CD8-positive, alpha-beta T cell (primary cell): ENCODE measurements at regions of chr12 and their contacts with region 1.

Region 1: GRCh38 chr12:103140286-103140685 is 182.8 kb downstream of the ASCL1 start:
- DNase-seq: no peak
- ATAC-seq: no peak
- H3K4me3 ChIP-seq: no peak overlapping the region
- H3K4me3 Mint-ChIP-seq: no peak overlapping the region
- H3K27ac ChIP-seq: no peak overlapping the region
- H3K27ac Mint-ChIP-seq: no peak overlapping the region
- H3K4me1 ChIP-seq: no peaks in the 10 kb centered on the region
- H3K4me1 Mint-ChIP-seq: no peaks in the 10 kb centered on the region
- H3K27me3 ChIP-seq: no peaks in the 10 kb centered on the region
- H3K27me3 Mint-ChIP-seq: no peaks in the 10 kb centered on the region
- CTCF ChIP-seq: no peak

Region 2: GRCh38 chr12:103197725-103198388 is 57.6 kb after region 1 on chr12:
- CTCF ChIA-PET with region 1: no interaction called
- POLR2A ChIA-PET with region 1: no interaction called
- intact Hi-C with region 1: loop called in 1 of 2 experiments (anchors 5 kb)
- DNase-seq: no peak
- ATAC-seq: no peak
- H3K4me3 ChIP-seq: no peak overlapping the region
- H3K4me3 Mint-ChIP-seq: no peak overlapping the region
- H3K27ac ChIP-seq: no peak overlapping the region
- H3K27ac Mint-ChIP-seq: no peak overlapping the region
- H3K4me1 ChIP-seq: no peaks in the 10 kb centered on the region
- H3K4me1 Mint-ChIP-seq: no peaks in the 10 kb centered on the region
- H3K27me3 ChIP-seq: no peaks in the 10 kb centered on the region
- H3K27me3 Mint-ChIP-seq: no peaks in the 10 kb centered on the region
- CTCF ChIP-seq: no peak